PC-3 (cell line): ENCODE measurements at regions of chr3 and their contacts with region 1.

Region 1: GRCh38 chr3:52742418-52743041 is 28.2 kb downstream of the NEK4 start:
- DNase-seq: peak; percentile 59
- ATAC-seq: peak; percentile 81
- H3K4me3 ChIP-seq: no peak overlapping the region
- H3K27ac ChIP-seq: no peak overlapping the region
- H3K4me1 ChIP-seq: no peaks in the 10 kb centered on the region
- H3K27me3 ChIP-seq: no peaks in the 10 kb centered on the region
- CTCF ChIP-seq: peak; percentile 83

Region 2: GRCh38 chr3:52524752-52525679 is 217.5 kb before region 1 on chr3:
- CTCF ChIA-PET with region 1: no interaction called
- POLR2A ChIA-PET with region 1: no interaction called
- intact Hi-C with region 1: no loop called
- DNase-seq: no peak
- ATAC-seq: no peak
- H3K4me3 ChIP-seq: no peak overlapping the region
- H3K27ac ChIP-seq: no peak overlapping the region
- H3K4me1 ChIP-seq: peaks cover 2% of the 10 kb centered on the region
- H3K27me3 ChIP-seq: no peaks in the 10 kb centered on the region
- CTCF ChIP-seq: no peak

Region 3: GRCh38 chr3:52820736-52821135 is 78.2 kb after region 1 on chr3:
- CTCF ChIA-PET with region 1: no interaction called
- POLR2A ChIA-PET with region 1: no interaction called
- intact Hi-C with region 1: loop called (anchors 1 kb)
- DNase-seq: peak; percentile 53
- ATAC-seq: peak; percentile 83
- H3K4me3 ChIP-seq: no peak overlapping the region
- H3K27ac ChIP-seq: no peak overlapping the region
- H3K4me1 ChIP-seq: no peaks in the 10 kb centered on the region
- H3K27me3 ChIP-seq: no peaks in the 10 kb centered on the region
- CTCF ChIP-seq: peak; percentile 74

Region 4: GRCh38 chr3:52838561-52839267 is 96.2 kb after region 1 on chr3:
- CTCF ChIA-PET with region 1: no interaction called
- POLR2A ChIA-PET with region 1: interaction called, 11 read pairs
- intact Hi-C with region 1: no loop called
- DNase-seq: no peak
- ATAC-seq: no peak
- H3K4me3 ChIP-seq: no peak overlapping the region
- H3K27ac ChIP-seq: no peak overlapping the region
- H3K4me1 ChIP-seq: no peaks in the 10 kb centered on the region
- H3K27me3 ChIP-seq: no peaks in the 10 kb centered on the region
- CTCF ChIP-seq: no peak

Region 5: DNA sequence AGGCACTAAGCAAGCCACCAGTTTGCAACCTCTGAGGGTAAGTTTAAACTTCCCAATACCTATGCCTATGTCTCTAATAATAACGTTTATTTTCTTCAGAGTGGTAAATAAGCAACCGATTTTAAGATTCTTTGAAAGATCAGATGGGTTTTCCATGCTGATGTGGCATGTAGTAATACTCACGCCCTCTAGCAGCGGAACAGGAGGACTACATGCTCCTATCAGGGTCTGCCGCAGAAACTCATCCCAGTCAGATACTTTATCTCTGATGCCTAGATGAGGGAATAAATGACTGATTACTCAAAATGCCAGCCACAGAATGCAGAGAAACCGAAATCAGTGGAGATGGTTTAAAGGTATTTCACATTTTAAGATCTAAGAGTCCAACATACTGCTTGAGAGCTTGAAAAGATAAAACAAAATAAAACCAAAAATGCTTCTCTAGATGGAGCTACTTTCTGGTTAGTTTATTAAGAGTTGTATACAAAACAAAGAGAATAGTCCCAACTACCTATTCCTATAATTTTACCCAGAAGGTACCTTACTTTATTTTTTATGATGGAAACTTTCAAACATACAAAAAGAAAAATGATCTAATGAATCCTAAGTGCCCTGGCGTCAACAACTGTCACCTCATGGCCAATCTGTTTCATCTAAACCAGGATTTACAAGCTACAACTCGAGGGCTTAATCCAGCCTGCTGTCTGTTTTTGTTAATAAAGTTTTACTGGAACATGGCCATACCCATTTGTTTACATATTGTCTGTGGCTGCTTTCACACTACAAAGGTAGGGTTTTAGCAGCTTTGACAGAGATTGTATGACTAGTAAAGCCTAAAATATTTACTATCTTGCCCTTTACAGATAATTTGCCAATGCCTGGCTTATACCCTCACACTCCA is 192.3 kb after region 1 on chr3:
- CTCF ChIA-PET with region 1: interaction called, 11 read pairs
- POLR2A ChIA-PET with region 1: no interaction called
- intact Hi-C with region 1: loop called (anchors 5 kb)
- DNase-seq: peak; percentile 64
- ATAC-seq: peak; percentile 99
- H3K4me3 ChIP-seq: no peak overlapping the region
- H3K27ac ChIP-seq: no peak overlapping the region
- H3K4me1 ChIP-seq: no peaks in the 10 kb centered on the region
- H3K27me3 ChIP-seq: no peaks in the 10 kb centered on the region
- CTCF ChIP-seq: peak; percentile 88